ENCODE measurements at regions of chr2 and their contacts with region 1.

Region 1: DNA sequence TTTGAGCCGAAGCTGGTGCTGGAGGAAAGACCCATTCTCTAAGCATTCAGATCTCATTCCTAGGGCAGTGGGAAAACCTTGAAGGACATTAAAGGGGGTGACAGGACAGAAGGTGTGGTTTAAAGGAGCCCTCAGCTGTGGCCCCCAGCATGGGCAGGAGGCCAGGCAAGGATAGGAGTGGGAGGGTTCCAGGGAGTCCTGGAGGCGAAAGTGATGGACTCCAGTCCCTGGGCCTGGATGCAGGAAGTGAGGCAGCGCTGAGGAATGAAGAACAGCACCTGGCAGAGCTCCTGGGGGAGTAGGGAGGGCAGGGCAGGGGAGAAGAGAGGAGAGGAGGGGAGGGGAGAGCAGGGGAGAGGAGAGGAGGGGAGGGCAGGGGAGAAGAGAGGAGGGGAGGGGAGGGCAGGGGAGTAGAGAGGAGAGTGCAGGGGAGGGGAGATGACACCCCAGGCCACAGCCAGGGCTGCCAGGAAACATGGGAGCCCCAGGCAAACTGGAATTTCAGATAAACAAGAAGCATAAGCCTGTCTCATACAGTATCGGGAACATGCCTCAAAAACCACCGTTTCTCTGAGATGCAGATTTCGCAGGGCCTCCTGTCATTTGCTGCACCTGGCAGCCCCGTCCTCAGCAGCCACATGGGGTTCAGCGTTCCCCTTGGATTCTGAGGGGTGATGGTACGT is 5.7 kb downstream of the RAMP1 start:
- DNase-seq: peak; percentile 93
- H3K4me3 ChIP-seq: peak overlapping the region in 1 of 4 donors; percentile 7
- H3K27ac ChIP-seq: peak overlapping the region; percentile 91 to 97 (median 96)
- H3K4me1 ChIP-seq: peaks cover 0 to 87% (median 83%) of the 10 kb centered on the region in 4 donors
- H3K27me3 ChIP-seq: no peaks in the 10 kb centered on the region
- CTCF ChIP-seq: no peak
- EP300 ChIP-seq: peak in 2 of 4 donors; percentile 26 to 91
- POLR2A ChIP-seq: no peak

Region 2: DNA sequence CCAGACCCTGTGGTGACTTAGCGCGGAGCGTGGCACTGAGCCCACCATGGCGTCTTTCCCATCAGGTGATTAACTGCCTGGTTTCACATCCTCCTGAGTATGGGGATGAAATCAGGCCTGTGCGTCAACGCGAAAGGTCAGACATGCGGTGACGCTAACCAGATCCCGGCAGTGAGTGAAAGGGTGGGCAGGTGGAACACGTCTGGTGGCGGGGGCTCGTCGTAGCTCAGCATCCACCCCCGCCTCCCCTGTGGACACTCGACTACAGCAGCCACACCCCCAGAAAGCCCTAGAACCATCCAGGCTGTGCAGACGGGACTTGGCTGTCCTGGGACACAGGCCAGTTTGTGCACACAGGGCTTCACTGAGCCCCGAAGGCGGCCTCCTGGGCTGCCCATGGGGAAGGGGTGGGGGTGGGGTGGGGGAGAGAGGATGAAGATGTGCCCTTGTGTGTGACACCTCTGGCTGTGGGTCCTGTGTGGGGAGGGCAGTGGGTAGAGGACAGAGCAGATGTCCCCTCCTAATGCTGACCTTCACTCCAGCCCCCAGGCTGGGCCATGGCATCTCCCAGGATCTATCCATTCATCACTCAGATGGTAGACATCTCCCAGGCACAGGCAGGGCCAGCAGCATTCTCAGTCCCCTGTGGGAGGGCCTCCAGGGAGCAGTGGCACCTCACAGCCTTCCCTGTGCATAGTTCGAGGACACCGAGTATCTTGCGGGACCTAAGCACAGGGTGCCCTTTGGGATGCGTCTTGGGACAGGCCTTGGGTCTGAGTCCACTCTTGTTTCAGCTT is 21.8 kb after region 1 on chr2:
- intact Hi-C with region 1: loop called (anchors 1 kb)
- DNase-seq: peak; percentile 100
- H3K4me3 ChIP-seq: peak overlapping the region in 2 of 4 donors; percentile 13 to 23
- H3K27ac ChIP-seq: peak overlapping the region; percentile 91 to 97 (median 96)
- H3K4me1 ChIP-seq: peaks cover 0 to 78% (median 68%) of the 10 kb centered on the region in 4 donors
- H3K27me3 ChIP-seq: no peaks in the 10 kb centered on the region
- CTCF ChIP-seq: no peak
- EP300 ChIP-seq: peak; percentile 99 to 100 (median 100)
- POLR2A ChIP-seq: no peak

Region 3: GRCh38 chr2:237895544-237896506 is 30.7 kb after region 1 on chr2:
- intact Hi-C with region 1: loop called (anchors 2 kb)
- DNase-seq: peak; percentile 95
- H3K4me3 ChIP-seq: no peak overlapping the region
- H3K27ac ChIP-seq: peak overlapping the region; percentile 91 to 97 (median 96)
- H3K4me1 ChIP-seq: peaks cover 0 to 87% (median 79%) of the 10 kb centered on the region in 4 donors
- H3K27me3 ChIP-seq: no peaks in the 10 kb centered on the region
- CTCF ChIP-seq: no peak
- EP300 ChIP-seq: peak; percentile 34 to 86 (median 76)
- POLR2A ChIP-seq: no peak

Measured in sigmoid colon (tissue), 7 donors.